PC-9 (cell line): ENCODE measurements at regions of chr9 and their contacts with region 1.

Region 1: DNA sequence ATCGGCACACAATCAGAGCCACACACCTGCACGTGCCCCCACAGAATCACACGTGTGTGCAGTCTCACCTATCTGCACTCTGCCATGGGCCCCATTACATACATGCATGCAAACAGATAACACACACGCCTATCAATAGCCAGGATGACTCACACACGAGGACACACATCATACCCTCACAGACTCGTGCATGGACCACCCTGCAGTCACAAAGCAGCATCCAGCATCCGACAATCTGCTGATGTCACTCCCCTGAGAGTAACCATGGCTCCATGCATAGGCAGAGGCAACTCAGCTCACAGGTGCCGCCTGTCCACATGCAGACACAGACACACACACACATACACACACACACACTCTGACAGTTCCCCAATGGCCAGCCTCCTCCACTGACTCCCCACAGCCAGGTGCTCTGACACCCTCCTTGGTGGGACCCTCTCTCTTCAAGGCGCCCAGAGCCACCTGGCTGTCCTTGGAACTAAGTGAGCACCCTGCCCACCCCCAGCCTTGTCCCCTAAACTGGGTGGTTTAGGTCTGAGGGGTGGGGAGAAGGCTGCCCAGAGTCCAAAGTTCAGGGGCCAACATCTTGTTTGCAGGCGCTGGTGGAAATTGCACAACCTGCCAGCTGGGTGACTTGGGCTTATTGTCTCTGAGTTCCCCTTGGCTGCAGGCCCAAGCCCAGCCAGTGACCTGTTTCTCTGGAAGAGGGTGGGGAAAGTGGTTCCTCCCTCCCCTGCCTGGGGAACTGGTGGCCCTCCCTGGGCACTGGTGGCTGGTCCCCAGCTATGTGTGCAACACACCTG is 34.6 kb upstream of the NEK6 start:
- DNase-seq: peak; percentile 81 to 87
- H3K4me3 ChIP-seq: no peak overlapping the region
- H3K27ac ChIP-seq: no peak overlapping the region
- H3K4me1 ChIP-seq: peaks cover 46% of the 10 kb centered on the region
- H3K27me3 ChIP-seq: no peaks in the 10 kb centered on the region
- CTCF ChIP-seq: no peak

Region 2: DNA sequence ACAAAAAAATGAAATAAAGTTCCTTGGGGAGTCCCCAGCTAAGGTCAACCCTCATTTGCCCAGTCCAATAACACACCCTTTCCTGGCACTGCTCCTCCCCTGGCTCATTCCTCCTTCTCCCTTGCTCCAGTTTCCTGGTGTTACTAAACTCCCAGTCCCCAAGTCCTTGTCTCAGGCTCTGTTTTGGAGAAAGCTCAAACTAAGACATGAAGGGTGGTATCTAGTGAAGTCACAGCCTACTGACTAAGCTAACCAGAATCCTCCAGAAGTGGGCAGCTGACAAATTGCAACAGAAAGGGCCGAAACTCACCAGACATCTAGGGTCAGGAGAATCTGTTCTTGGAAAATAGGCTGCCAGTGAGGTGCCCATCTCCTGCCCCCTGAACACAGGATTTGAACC is 84.1 kb before region 1 on chr9:
- CTCF ChIA-PET with region 1: interaction called, 22 read pairs
- POLR2A ChIA-PET with region 1: interaction called, 5 read pairs
- intact Hi-C with region 1: no loop called
- DNase-seq: no peak
- H3K4me3 ChIP-seq: no peak overlapping the region
- H3K27ac ChIP-seq: no peak overlapping the region
- H3K4me1 ChIP-seq: peaks cover 32% of the 10 kb centered on the region
- H3K27me3 ChIP-seq: no peaks in the 10 kb centered on the region
- CTCF ChIP-seq: no peak

Region 3: DNA sequence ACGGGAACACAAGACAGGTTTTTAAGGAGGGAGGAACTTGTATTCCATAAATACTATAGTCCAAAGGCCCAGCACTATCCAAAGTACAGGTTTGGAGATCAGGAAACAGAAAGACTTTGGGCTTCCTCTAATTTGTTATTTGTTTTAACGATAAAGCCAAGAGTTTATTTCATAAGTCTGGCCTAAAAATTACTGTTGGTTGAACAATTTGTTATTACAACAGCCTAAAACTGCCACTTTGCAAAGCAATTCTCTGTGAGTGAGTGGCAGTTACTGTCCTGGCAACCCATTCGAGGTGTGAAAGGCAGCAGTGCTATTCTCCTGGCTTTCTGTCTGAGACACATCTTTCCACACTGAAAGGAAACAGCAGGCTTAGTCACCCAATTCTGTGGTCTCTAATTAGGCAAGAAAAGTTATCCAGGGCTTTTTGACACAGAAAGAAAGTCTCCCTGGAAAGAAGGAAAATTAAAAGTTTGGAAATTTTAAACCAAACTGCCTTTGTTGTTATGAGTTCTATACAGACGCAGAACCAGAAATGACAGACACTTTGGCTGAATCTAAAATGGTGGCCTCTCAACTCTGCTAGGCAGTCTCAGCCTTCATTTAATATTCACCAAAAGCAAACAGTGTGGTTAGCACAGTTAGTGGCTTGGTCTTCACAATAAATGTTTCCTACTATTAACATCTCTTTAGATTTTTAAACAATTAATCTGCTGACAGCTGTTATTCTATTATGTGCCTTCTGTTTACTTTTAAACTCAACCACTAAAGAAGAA is 158.2 kb after region 1 on chr9:
- CTCF ChIA-PET with region 1: no interaction called
- POLR2A ChIA-PET with region 1: no interaction called
- intact Hi-C with region 1: no loop called
- DNase-seq: no peak
- H3K4me3 ChIP-seq: no peak overlapping the region
- H3K27ac ChIP-seq: no peak overlapping the region
- H3K4me1 ChIP-seq: peaks cover 7% of the 10 kb centered on the region
- H3K27me3 ChIP-seq: no peaks in the 10 kb centered on the region
- CTCF ChIP-seq: no peak

Region 4: DNA sequence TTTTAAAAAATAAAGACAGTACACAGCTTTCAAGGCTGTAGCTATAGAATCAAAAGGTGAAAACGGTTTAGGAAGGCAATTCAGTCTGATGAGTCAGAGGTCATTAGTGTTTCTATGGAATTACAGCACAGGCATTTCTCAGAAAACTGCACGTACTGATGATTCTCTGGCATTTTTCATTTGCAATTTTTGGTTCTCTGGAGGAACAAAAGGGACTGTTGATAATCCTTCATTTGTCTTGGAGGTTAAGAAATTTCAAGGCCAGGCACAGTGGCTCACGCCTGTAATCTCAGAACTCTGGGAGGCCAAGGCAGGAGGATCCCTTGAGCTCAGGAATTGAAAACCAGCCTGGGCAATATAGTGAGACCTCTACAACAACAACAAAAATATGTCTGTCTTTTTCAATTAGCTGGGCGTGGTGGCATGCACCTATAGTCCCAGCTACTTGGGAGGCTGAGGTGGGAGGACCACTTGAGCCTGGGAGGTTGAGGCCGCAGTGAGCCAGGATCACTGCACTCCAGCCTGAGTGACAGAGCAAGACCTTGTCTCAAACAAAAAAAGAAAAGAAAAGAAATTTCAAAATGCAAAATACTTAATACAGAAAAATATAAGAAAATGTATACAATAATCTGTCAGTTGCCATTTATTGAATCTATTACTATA is 520.7 kb after region 1 on chr9:
- CTCF ChIA-PET with region 1: no interaction called
- POLR2A ChIA-PET with region 1: no interaction called
- intact Hi-C with region 1: no loop called
- DNase-seq: no peak
- H3K4me3 ChIP-seq: no peak overlapping the region
- H3K27ac ChIP-seq: no peak overlapping the region
- H3K4me1 ChIP-seq: peaks cover 10% of the 10 kb centered on the region; the same call in 1 of the 2 replicates
- H3K27me3 ChIP-seq: no peaks in the 10 kb centered on the region
- CTCF ChIP-seq: no peak